ENCODE measurements at regions of chr3 and their contacts with region 1.

Region 1: GRCh38 chr3:50227390-50228183 is 8.4 kb upstream of the GNAI2 start:
- DNase-seq: peak; percentile 87 to 91
- ATAC-seq: peak; percentile 88 to 89
- H3K4me3 ChIP-seq: peak overlapping the region; percentile 59
- H3K27ac ChIP-seq: peak overlapping the region; percentile 82 to 97
- H3K4me1 ChIP-seq: peaks cover 8% of the 10 kb centered on the region; the same call in 1 of the 3 replicates
- CTCF ChIP-seq: peak; percentile 91
- EP300 ChIP-seq: no peak
- POLR2A ChIP-seq: no peak; the same call in 1 of the 2 replicates
- RAD21 ChIP-seq: peak; percentile 68 to 94

Region 2: GRCh38 chr3:50112462-50112861 is 115.1 kb before region 1 on chr3:
- CTCF ChIA-PET with region 1: interaction called, 11 read pairs
- POLR2A ChIA-PET with region 1: no interaction called
- DNase-seq: peak in 1 of 2 experiments; percentile 42
- ATAC-seq: peak; percentile 47 to 71; a peak in 4 of 6 replicates
- H3K4me3 ChIP-seq: no peak overlapping the region
- H3K27ac ChIP-seq: no peak overlapping the region
- H3K4me1 ChIP-seq: no peaks in the 10 kb centered on the region
- CTCF ChIP-seq: no peak
- EP300 ChIP-seq: no peak
- POLR2A ChIP-seq: no peak
- RAD21 ChIP-seq: no peak

Region 3: GRCh38 chr3:50184242-50184978 is 43.2 kb before region 1 on chr3:
- CTCF ChIA-PET with region 1: interaction called, 550 read pairs
- POLR2A ChIA-PET with region 1: no interaction called
- DNase-seq: no peak
- ATAC-seq: no peak
- H3K4me3 ChIP-seq: no peak overlapping the region
- H3K27ac ChIP-seq: no peak overlapping the region
- H3K4me1 ChIP-seq: peaks cover 6% of the 10 kb centered on the region; the same call in 1 of the 3 replicates
- CTCF ChIP-seq: no peak
- EP300 ChIP-seq: no peak
- POLR2A ChIP-seq: no peak
- RAD21 ChIP-seq: no peak

Region 4: GRCh38 chr3:50205414-50206276 is 21.9 kb before region 1 on chr3:
- CTCF ChIA-PET with region 1: interaction called, 64 read pairs
- POLR2A ChIA-PET with region 1: no interaction called
- DNase-seq: no peak
- ATAC-seq: no peak
- H3K4me3 ChIP-seq: no peak overlapping the region
- H3K27ac ChIP-seq: no peak overlapping the region
- H3K4me1 ChIP-seq: no peaks in the 10 kb centered on the region; the same call in 2 of the 3 replicates
- CTCF ChIP-seq: no peak
- EP300 ChIP-seq: no peak
- POLR2A ChIP-seq: no peak
- RAD21 ChIP-seq: no peak

Region 5: DNA sequence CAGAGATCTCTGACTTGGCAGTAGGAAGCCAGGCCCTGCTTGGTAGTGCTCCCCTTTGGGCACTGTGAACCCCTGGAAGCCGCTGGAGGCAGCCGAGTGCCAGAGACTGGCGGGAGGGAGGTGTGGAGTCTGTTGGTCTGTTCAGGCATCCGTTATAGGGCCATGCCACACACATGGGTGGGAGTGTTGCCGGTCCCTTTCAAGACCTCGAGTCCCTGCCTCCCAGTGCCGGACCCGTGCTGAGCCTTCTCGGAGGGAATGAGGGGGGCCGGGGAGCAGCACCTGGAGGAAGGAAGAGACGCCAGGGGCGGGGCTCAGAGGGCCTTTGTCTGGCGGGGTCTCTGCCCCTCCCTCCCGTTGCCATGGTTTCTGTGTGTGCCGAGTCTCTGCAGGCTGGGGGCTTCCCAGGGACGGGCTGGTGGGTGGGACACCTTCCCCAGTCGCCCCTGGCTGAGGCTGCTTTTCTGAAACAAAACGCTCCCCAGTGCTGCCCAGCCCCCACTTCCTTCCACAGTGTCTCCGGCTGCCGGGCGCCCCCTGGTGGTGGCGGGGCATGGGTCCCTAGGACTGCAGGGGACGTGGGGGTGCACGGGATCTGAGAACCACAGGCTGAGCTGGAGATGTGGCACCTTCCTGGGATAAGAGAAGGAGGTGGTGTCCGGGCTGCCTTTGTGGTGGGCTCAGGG is 18.4 kb after region 1 on chr3:
- CTCF ChIA-PET with region 1: interaction called, 219 read pairs
- POLR2A ChIA-PET with region 1: interaction called, 11 read pairs
- DNase-seq: peak; percentile 61 to 78
- ATAC-seq: peak; percentile 86 to 94
- H3K4me3 ChIP-seq: peak overlapping the region; percentile 41
- H3K27ac ChIP-seq: peak overlapping the region; percentile 89 to 95
- H3K4me1 ChIP-seq: peaks cover 35% of the 10 kb centered on the region
- CTCF ChIP-seq: peak; percentile 90
- EP300 ChIP-seq: no peak
- POLR2A ChIP-seq: no peak
- RAD21 ChIP-seq: peak; percentile 59 to 64

Region 6: GRCh38 chr3:50272911-50273693 is 45.5 kb after region 1 on chr3:
- CTCF ChIA-PET with region 1: interaction called, 60 read pairs
- POLR2A ChIA-PET with region 1: no interaction called
- DNase-seq: peak; percentile 74 to 77
- ATAC-seq: peak; percentile 43 to 75
- H3K4me3 ChIP-seq: no peak overlapping the region
- H3K27ac ChIP-seq: 0 out of 6 replicates have a peak overlapping the region, but pooled peaks of 1 of the 2 experiments have one; percentile 37
- H3K4me1 ChIP-seq: peaks cover 41% of the 10 kb centered on the region
- CTCF ChIP-seq: peak; percentile 78
- EP300 ChIP-seq: no peak
- POLR2A ChIP-seq: no peak
- RAD21 ChIP-seq: peak; percentile 91

Region 7: DNA sequence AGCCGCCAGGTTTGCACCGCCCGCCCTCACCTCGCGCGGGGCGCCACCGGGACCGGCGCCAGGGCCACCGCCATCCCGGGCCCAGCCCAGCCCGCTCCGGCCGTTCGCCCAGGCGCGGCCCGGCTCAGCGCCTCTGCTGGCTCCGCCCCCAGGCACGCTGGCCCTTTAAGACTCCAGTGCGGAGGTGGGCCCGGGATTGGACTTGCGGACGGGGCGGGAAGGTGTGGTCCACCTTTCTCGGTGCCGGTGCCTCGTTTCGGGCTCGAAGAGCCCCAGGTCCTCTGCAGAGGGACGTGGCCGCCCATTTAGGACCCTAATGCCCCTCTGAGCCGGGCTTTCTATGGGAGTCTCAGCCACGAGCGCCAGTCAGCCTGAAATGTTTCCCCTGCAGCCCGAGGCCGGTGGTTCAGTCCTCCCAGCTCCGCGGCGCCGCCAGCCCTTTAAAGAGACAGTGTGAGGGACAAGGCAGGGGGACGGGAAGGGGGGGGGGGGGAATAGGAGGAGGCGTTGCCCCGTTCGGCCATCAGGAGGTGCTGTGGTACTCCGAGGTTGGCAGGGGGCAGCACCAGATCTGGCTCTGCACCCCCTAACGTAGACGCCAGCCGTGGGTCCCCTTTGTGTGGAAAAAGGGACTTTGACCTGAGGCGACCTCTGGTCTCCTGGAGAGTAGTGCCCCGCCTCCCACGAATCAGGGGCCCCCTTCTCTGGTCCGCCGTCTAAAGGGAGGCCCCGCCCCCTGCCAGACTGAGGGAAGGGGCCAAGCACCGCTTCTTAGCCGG is 93.9 kb after region 1 on chr3:
- CTCF ChIA-PET with region 1: interaction called, 12 read pairs
- POLR2A ChIA-PET with region 1: no interaction called
- DNase-seq: peak; percentile 68 to 88
- ATAC-seq: peak; percentile 80 to 85
- H3K4me3 ChIP-seq: peak overlapping the region; percentile 65
- H3K27ac ChIP-seq: peak overlapping the region; percentile 99 to 100
- H3K4me1 ChIP-seq: peaks cover 30% of the 10 kb centered on the region
- CTCF ChIP-seq: peak; percentile 42; the same call in 2 of the 3 replicates
- EP300 ChIP-seq: no peak
- POLR2A ChIP-seq: peak; percentile 50
- RAD21 ChIP-seq: no peak